WTC11 (cell line): ENCODE measurements at regions of chr15 and their contacts with region 1.

Region 1: DNA sequence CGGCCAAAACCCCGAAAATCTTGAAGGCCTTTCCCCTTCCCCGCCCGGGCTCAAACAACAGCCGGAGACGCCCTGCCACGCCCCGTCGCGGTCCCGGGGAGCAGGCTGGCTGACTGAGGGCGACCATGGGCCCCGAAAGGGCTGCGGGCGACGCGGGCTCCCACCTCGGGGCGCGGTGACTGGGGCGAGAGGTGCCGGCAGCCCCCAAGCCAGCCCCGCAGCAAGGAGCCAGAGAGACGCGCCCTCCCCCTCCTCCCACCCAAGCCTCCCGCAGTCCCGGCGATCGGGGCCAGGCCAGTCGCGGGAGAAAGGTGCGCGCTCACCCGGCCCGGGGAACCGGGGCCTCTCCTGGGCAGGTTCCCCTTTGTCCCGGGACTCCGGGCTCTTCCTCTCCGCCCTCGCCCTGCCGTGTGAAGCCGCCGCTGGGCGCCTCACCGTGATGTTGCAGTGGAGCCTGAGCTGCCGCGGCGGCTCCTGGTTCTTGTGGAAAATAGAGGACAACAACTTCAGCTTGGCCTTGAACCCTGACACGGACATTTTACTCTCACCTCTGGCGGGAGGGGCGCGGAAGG is 30.6 kb upstream of the ZSCAN2 start:
- DNase-seq: peak; percentile 45
- ATAC-seq: peak; percentile 40
- H3K4me3 Mint-ChIP-seq: peak overlapping the region; percentile 82
- H3K27ac Mint-ChIP-seq: no peak overlapping the region
- H3K4me1 Mint-ChIP-seq: peaks cover 11% of the 10 kb centered on the region
- H3K27me3 Mint-ChIP-seq: no peaks in the 10 kb centered on the region; the same call in 1 of the 2 replicates
- CTCF ChIP-seq: no peak

Region 2: GRCh38 chr15:84588053-84588874 is 18.0 kb after region 1 on chr15:
- CTCF ChIA-PET with region 1: interaction called, 76 read pairs
- POLR2A ChIA-PET with region 1: no interaction called
- DNase-seq: peak; percentile 94
- ATAC-seq: peak; percentile 99
- H3K4me3 Mint-ChIP-seq: peak overlapping the region; percentile 66
- H3K27ac Mint-ChIP-seq: no peak overlapping the region
- H3K4me1 Mint-ChIP-seq: peaks cover 22% of the 10 kb centered on the region
- H3K27me3 Mint-ChIP-seq: peaks cover 19% of the 10 kb centered on the region
- CTCF ChIP-seq: peak; percentile 93

Region 3: GRCh38 chr15:84600851-84601838 is 30.9 kb after region 1 on chr15 and contains the start of gene ZSCAN2:
- CTCF ChIA-PET with region 1: interaction called, 16 read pairs
- POLR2A ChIA-PET with region 1: no interaction called
- DNase-seq: peak; percentile 98
- ATAC-seq: peak; percentile 83
- H3K4me3 Mint-ChIP-seq: peak within 1 kb of the TSS; percentile 87
- H3K27ac Mint-ChIP-seq: peak within 1 kb of the TSS; percentile 78
- H3K4me1 Mint-ChIP-seq: peaks cover 48% of the 10 kb centered on the region
- H3K27me3 Mint-ChIP-seq: no peaks in the 10 kb centered on the region
- CTCF ChIP-seq: no peak
- total RNA-seq, gene ZSCAN2: 39.6 to 51.9 TPM (median 44.4 TPM) in 3 replicates

Region 4: DNA sequence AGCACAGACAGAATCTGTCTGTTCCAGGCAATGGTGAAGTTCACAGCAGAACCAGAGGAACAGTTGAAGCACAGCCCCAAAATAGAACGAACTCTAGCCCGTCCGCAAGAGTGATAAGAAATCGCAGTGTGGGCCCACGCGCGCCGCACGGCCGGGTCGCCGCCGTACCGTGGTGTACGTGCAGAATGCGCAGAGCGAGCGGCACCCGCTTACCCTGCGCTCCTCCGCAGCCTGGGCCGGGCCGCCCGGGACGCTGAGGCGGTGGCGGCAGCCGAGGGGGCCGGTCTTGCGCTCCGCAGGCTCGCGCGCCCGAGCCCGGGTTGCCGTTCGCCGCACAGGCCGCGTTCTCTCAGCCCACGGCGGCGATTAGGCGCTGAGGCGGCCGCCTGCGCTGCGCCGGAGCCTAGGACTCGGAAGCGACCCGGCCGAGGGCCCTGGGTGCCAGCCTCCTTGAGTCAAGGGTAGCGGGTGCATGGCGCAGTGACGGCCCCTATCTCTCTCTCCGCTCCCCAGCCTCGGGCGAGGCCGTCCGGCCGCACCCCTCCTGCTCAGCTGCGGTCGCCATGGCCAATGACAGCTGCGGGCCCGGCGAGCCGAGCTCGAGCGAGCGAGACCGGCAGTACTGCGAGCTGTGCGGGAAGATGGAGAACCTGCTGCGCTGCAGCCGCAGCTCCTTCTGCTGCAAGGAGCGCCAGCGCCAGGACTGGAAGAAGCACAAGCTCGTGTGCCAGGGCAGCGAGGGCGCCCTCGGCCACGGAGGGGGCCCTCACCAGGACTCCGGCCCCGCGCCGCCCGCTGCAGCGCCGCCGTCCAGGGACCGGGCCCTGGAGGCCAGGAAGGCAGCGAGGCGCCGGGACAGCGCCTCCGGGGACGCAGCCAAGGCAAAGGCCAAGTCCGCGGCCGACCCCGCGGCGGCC is 63.3 kb after region 1 on chr15:
- CTCF ChIA-PET with region 1: interaction called, 17 read pairs
- POLR2A ChIA-PET with region 1: no interaction called
- DNase-seq: peak; percentile 68
- ATAC-seq: peak; percentile 51
- H3K4me3 Mint-ChIP-seq: peak overlapping the region; percentile 90
- H3K27ac Mint-ChIP-seq: peak overlapping the region; percentile 52; the same call in 1 of the 2 replicates
- H3K4me1 Mint-ChIP-seq: peaks cover 52% of the 10 kb centered on the region
- H3K27me3 Mint-ChIP-seq: peaks cover 16% of the 10 kb centered on the region
- CTCF ChIP-seq: no peak

Region 5: GRCh38 chr15:84721371-84721770 is 151.1 kb after region 1 on chr15:
- CTCF ChIA-PET with region 1: interaction called, 10 read pairs
- POLR2A ChIA-PET with region 1: no interaction called
- DNase-seq: no peak
- ATAC-seq: peak; percentile 42
- H3K4me3 Mint-ChIP-seq: no peak overlapping the region
- H3K27ac Mint-ChIP-seq: peak overlapping the region; percentile 20; the same call in 1 of the 2 replicates
- H3K4me1 Mint-ChIP-seq: peaks cover 28% of the 10 kb centered on the region
- H3K27me3 Mint-ChIP-seq: no peaks in the 10 kb centered on the region
- CTCF ChIP-seq: no peak